Left lung (tissue), 14 donors: ENCODE measurements at regions of chr17 and their contacts with region 1.

Region 1: DNA sequence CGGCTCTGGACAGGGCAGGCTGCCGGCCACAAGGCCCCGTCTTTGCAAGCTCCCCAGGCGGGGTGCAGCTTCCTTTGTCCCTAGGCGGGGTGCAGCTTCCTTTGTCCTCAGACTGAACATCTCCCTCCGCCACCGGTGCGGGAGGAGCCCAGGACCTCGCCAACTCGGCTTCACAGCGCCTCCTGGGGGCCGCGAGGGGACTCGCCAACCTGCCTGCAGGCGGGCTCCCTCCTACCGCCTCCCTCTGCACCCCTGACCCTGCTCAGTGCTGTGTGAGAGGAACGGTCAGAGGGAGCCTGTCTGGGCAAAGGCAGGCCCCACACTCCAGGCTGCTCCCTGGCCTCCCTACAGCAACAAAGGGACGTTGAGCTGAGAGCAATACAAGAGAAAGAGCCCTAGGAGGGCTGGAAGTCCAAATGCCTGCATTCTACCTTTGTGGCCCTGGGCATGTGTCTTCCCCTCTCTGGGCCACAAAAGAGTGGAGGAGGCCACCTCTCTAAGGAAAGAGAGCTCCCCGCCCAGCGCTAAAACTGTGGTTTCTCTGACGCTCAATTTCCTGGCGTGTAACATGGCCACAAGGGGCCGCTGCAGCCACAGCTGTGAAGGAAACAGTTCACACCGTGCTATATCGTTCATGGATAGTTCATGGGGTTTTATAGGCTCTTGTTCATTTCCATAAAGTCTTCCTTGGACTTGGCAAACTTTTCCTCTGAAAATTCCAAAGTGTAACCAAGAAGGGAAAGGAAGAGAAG is 20.9 kb upstream of the KRT19 start:
- DNase-seq: peak; percentile 66 to 97 (median 86)
- ATAC-seq: peak; percentile 95
- H3K4me3 ChIP-seq: peak overlapping the region in 1 of 2 donors; percentile 14
- H3K27ac ChIP-seq: peak overlapping the region; percentile 46 to 51
- H3K4me1 ChIP-seq: peaks cover 16 to 22% of the 10 kb centered on the region in 2 donors
- H3K27me3 ChIP-seq: peaks cover 0 to 17% of the 10 kb centered on the region in 2 donors
- CTCF ChIP-seq: peak; percentile 74 to 88

Region 2: GRCh38 chr17:40854159-40854814 is 694.7 kb before region 1 on chr17:
- intact Hi-C with region 1: no loop called
- DNase-seq: no peak
- ATAC-seq: peak; percentile 73
- H3K4me3 ChIP-seq: no peak overlapping the region
- H3K27ac ChIP-seq: no peak overlapping the region
- H3K4me1 ChIP-seq: peaks cover 0 to 9% of the 10 kb centered on the region in 2 donors
- H3K27me3 ChIP-seq: no peaks in the 10 kb centered on the region
- CTCF ChIP-seq: no peak

Region 3: GRCh38 chr17:40909351-40909750 is 639.7 kb before region 1 on chr17:
- intact Hi-C with region 1: loop called in 1 of 2 experiments (anchors 10 kb)
- DNase-seq: peak; percentile 61 to 80 (median 76)
- ATAC-seq: peak; percentile 99
- H3K4me3 ChIP-seq: no peak overlapping the region
- H3K27ac ChIP-seq: peak overlapping the region in 1 of 2 donors; percentile 0
- H3K4me1 ChIP-seq: peaks cover 0 to 36% of the 10 kb centered on the region in 2 donors
- H3K27me3 ChIP-seq: peaks cover 0 to 26% of the 10 kb centered on the region in 2 donors
- CTCF ChIP-seq: peak; percentile 69

Region 4: DNA sequence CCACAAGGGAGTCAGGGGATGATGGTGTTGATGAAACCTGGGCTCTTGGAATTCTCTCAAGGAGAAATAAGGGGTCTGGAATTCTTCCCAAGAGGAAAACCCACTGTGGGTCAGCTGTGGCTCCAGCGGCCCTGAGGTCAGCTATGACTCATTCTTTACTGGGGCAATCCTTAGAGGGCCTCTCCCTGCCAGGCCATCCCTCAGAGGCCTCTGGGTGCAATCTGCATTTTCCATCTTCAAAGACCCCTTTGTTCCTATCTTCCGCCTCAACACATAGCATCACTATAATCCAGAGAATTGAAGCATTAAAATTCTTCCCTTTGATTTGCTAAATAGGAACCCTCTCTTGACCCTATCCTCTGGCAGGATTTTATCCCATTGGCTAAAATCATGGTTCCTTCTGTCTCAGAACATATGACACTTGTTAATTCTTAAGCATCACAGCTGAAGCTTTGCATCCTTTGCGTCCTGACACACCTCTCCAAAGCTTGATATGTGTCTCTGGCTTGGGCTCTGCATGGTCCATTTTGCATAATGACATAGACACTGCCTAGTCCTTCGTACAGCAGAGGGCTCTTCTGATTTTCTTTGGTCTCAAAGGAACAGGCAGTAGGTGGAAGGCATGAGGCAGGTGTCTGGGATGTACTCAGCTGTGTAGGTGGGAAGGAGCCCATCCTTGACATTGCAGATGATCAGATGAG is 120.3 kb before region 1 on chr17:
- intact Hi-C with region 1: no loop called
- DNase-seq: no peak
- ATAC-seq: no peak
- H3K4me3 ChIP-seq: no peak overlapping the region
- H3K27ac ChIP-seq: no peak overlapping the region
- H3K4me1 ChIP-seq: no peaks in the 10 kb centered on the region
- H3K27me3 ChIP-seq: peaks cover 0 to 4% of the 10 kb centered on the region in 2 donors
- CTCF ChIP-seq: no peak

Region 5: GRCh38 chr17:41602524-41602923 is 53.5 kb after region 1 on chr17:
- intact Hi-C with region 1: no loop called
- DNase-seq: no peak
- ATAC-seq: no peak
- H3K4me3 ChIP-seq: no peak overlapping the region
- H3K27ac ChIP-seq: no peak overlapping the region
- H3K4me1 ChIP-seq: no peaks in the 10 kb centered on the region
- H3K27me3 ChIP-seq: peaks cover 0 to 18% of the 10 kb centered on the region in 2 donors
- CTCF ChIP-seq: no peak

Region 6: GRCh38 chr17:41655611-41656351 is 106.8 kb after region 1 on chr17:
- intact Hi-C with region 1: loop called in 1 of 2 experiments (anchors 5 kb)
- DNase-seq: peak in 3 of 4 donors; percentile 87 to 93 (median 88)
- ATAC-seq: peak; percentile 73
- H3K4me3 ChIP-seq: no peak overlapping the region
- H3K27ac ChIP-seq: peak overlapping the region; percentile 76 to 85
- H3K4me1 ChIP-seq: peaks cover 0 to 12% of the 10 kb centered on the region in 2 donors
- H3K27me3 ChIP-seq: no peaks in the 10 kb centered on the region
- CTCF ChIP-seq: no peak